ENCODE measurements at regions of chr7 and their contacts with region 1.

Region 1: DNA sequence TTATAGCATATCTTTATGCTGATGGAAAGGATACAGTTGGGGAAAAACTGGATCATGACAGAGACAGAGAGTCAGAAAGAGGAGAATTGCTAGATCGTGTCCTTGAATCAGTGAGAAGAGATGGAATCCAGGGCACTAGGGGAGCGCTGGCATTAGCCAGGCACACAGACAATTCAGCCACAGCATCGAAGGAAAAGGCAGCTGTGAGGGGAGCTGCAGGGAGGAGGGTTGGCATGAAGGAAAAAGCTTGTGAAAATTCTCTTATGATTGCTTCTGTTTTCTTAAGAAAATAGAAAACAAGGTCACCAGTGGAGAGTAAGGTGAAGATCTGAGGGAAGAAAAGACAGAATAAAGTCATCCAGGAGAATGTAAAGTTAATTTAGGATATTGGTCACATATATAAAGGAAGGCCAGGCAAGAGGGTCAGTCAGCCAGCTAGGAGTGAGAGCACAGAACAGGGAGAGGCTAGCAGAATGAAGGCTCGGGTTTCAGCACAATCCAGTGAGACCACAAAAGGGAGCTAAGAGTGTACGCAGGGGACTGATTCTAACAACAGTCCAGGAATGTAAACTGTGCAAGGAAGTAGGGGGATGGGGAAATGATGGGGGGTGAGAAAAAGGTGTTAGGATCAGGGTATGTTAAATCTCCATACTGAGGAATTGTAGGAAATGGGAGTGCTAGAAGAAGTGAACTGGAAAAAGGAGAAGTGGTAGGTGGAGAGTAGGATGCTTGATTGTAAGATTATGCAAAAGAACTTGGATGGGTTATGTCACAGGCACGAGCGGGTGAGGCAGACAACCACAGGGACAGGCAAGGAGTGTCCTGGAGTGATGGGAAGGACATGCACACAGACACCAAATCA is 112.0 kb downstream of the RNF32 start:
- DNase-seq: no peak
- ATAC-seq: peak; percentile 57; the same call in 1 of the 2 replicates
- H3K4me3 Mint-ChIP-seq: no peak overlapping the region
- H3K27ac Mint-ChIP-seq: no peak overlapping the region
- H3K4me1 Mint-ChIP-seq: no peaks in the 10 kb centered on the region; the same call in none of the 2 replicates
- H3K27me3 Mint-ChIP-seq: no peaks in the 10 kb centered on the region
- CTCF ChIP-seq: no peak

Region 2: GRCh38 chr7:156650042-156650441 is 102.6 kb before region 1 on chr7:
- CTCF ChIA-PET with region 1: interaction called, 14 read pairs
- POLR2A ChIA-PET with region 1: no interaction called
- DNase-seq: peak; percentile 68
- ATAC-seq: peak; percentile 96
- H3K4me3 Mint-ChIP-seq: no peak overlapping the region
- H3K27ac Mint-ChIP-seq: no peak overlapping the region
- H3K4me1 Mint-ChIP-seq: peaks cover 14% of the 10 kb centered on the region
- H3K27me3 Mint-ChIP-seq: no peaks in the 10 kb centered on the region
- CTCF ChIP-seq: no peak

Region 3: DNA sequence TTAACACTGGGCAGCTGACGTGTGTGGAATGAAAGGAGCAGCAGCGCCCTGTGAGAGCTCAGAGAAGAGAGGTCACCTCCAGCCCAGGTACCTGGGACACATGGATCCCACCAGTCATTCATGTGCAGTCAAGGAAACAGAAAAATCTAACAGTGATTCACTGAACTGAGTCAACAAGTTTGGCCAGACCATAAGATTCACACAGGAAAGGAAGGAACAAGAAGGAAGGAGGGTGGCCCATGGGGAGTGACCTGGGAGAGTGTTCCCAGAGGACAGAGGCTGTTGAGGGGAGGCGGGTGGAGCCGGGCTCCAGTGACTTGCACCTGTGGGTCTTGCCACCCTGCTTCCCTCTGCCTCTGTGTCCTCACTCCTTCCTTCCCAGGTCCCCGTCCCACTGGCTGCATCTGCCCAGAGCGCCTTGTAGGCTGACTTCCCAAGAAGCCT is 84.4 kb before region 1 on chr7:
- CTCF ChIA-PET with region 1: interaction called, 10 read pairs
- POLR2A ChIA-PET with region 1: no interaction called
- DNase-seq: no peak
- ATAC-seq: no peak
- H3K4me3 Mint-ChIP-seq: no peak overlapping the region
- H3K27ac Mint-ChIP-seq: peak overlapping the region; percentile 75; the same call in 1 of the 2 replicates
- H3K4me1 Mint-ChIP-seq: peaks cover 33% of the 10 kb centered on the region
- H3K27me3 Mint-ChIP-seq: peaks cover 8% of the 10 kb centered on the region
- CTCF ChIP-seq: no peak

Region 4: DNA sequence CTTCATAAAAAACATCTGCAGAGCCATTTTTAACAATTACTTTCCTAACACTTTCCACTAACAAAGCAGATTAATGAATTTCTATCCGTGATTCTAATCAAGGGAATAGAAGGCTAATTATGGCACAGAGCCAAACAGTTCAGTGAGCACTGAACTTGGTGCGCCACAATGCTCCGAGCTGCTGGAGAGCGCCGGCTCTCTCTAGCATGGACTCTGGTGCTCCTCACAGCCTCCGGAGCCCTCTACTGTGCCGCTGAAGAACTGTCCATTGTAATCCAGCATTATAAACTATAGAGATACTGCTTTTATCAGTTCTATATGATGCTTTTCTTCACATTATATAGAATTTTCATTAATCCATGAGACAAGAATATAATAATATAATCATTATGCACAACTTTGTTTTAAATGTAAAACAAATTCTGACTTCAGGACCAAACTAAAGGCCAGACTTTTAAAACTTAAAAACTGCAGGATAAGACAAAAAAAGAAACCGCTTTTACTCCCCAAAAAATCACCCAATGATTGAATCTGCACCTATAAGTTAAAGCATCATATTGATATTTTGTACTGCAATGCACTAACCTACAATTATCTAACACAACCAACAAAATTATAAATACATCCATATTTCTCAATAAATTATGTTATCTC is 11.5 kb after region 1 on chr7:
- CTCF ChIA-PET with region 1: interaction called, 10 read pairs
- POLR2A ChIA-PET with region 1: no interaction called
- DNase-seq: peak; percentile 56
- ATAC-seq: peak; percentile 97
- H3K4me3 Mint-ChIP-seq: no peak overlapping the region
- H3K27ac Mint-ChIP-seq: no peak overlapping the region
- H3K4me1 Mint-ChIP-seq: peaks cover 3% of the 10 kb centered on the region
- H3K27me3 Mint-ChIP-seq: no peaks in the 10 kb centered on the region
- CTCF ChIP-seq: no peak

Measured in WTC11 (cell line).